Heart right ventricle (tissue), 16 donors: ENCODE measurements at regions of chr12 and their contacts with region 1.

Region 1: DNA sequence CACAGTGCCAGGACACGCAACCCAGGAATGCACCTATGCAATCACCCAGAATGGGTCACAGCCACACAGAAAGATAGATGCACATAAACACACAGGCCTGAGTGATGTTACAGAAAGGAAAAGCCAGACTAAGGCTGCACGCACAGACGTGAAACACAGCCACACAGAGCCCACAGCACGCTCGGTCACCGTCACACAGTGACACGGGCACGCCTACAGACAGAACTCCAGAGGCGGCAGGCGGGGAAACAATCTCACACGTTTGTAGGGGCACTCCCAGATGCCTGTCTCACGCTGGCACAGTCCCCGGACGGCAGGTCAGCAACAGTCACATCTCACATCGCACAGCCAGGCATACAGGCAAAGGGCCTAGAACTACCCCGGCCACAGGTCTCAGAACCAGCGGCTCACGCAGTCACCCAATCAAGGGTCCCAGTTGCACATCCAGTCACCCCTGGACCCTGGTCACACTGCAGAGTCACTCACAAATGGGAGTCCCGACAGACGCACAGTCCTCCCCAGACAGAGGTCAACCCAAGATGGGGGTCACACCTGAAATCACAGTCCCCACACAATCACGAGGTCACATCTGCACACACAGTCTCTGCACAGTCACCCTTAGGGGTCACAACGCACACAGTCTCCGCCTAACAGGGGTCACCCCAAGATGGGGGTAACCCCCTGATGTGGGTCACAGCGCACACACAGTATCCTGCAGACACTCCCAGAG is 790 bp downstream of the SSH1 start:
- DNase-seq: peak; percentile 79 to 84
- ATAC-seq: peak; percentile 8 to 70 (median 52)
- H3K4me3 ChIP-seq: peak overlapping the region; percentile 51 to 92 (median 83)
- H3K27ac ChIP-seq: peak overlapping the region; percentile 76 to 98 (median 97)
- H3K4me1 ChIP-seq: peaks cover 38 to 81% (median 66%) of the 10 kb centered on the region in 9 donors
- H3K27me3 ChIP-seq: no peaks in the 10 kb centered on the region
- CTCF ChIP-seq: no peak

Region 2: DNA sequence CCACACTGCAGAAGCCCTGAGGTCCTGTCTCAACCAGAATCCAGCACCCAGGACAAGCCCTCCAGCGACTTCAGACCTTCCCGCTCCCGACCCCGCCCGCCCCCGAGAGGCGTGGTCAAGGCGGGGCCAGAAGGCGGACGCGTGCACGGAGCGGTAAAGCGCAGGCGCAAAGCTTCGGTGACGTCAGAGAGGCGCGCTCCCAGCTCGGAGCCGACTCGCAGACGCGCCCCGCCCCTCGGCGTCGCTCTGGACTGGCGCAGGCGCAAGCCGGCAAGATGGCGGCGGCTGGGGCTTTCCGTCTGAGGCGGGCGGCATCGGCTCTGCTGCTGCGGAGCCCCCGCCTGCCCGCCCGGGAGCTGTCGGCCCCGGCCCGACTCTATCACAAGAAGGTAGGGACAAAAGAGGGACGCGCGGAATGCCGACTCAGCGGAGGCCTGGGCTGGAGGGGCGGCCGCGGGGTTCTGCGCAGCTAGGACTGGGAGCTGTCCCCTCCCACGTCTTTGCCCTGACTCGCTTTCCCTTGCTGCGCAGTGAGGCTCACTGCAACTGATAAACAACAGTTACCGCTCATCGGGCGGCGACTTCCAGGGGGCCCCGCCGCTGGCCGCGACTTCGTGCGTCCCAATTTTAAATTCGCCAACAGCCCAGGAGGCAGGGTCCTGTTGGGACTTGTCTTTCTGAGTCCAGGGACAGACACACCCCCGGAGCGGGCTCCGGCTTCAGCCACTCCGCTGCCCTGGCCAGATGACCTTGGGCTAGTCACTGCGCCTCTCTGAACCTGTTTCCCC is 294.1 kb before region 1 on chr12 and contains the start of gene ISCU:
- intact Hi-C with region 1: loop called in 5 of 10 experiments (anchors 2 to 10 kb)
- DNase-seq: peak; percentile 98 to 99
- ATAC-seq: peak; percentile 88 to 95 (median 92)
- H3K4me3 ChIP-seq: peak within 1 kb of the TSS; percentile 57 to 99 (median 90)
- H3K27ac ChIP-seq: peak within 1 kb of the TSS; percentile 78 to 97 (median 94)
- H3K4me1 ChIP-seq: peaks cover 5 to 80% (median 67%) of the 10 kb centered on the region in 9 donors
- H3K27me3 ChIP-seq: no peaks in the 10 kb centered on the region
- CTCF ChIP-seq: no peak
- total RNA-seq, gene ISCU: 321 to 630 (median 522) TPM

Region 3: GRCh38 chr12:108664338-108665258 is 192.0 kb before region 1 on chr12:
- intact Hi-C with region 1: loop called in 6 of 10 experiments (anchors 2 to 5 kb)
- DNase-seq: peak; percentile 53 to 89
- ATAC-seq: peak; percentile 88 to 96 (median 92)
- H3K4me3 ChIP-seq: peak overlapping the region in 1 of 10 donors; percentile 14
- H3K27ac ChIP-seq: peak overlapping the region; percentile 36 to 86 (median 78)
- H3K4me1 ChIP-seq: peaks cover 7 to 71% (median 56%) of the 10 kb centered on the region in 9 donors
- H3K27me3 ChIP-seq: no peaks in the 10 kb centered on the region
- CTCF ChIP-seq: peak; percentile 79 to 99 (median 95)

Region 4: GRCh38 chr12:108826101-108826806 is 30.3 kb before region 1 on chr12:
- intact Hi-C with region 1: loop called in 1 of 10 experiments (anchors 2 kb)
- DNase-seq: peak; percentile 45 to 81
- ATAC-seq: peak; percentile 64 to 80 (median 68)
- H3K4me3 ChIP-seq: peak overlapping the region in 8 of 10 donors; percentile 1 to 39 (median 24)
- H3K27ac ChIP-seq: peak overlapping the region; percentile 85 to 96 (median 90)
- H3K4me1 ChIP-seq: peaks cover 38 to 97% (median 90%) of the 10 kb centered on the region in 9 donors
- H3K27me3 ChIP-seq: no peaks in the 10 kb centered on the region
- CTCF ChIP-seq: peak in 3 of 9 donors; percentile 20 to 31 (median 20)

Region 5: DNA sequence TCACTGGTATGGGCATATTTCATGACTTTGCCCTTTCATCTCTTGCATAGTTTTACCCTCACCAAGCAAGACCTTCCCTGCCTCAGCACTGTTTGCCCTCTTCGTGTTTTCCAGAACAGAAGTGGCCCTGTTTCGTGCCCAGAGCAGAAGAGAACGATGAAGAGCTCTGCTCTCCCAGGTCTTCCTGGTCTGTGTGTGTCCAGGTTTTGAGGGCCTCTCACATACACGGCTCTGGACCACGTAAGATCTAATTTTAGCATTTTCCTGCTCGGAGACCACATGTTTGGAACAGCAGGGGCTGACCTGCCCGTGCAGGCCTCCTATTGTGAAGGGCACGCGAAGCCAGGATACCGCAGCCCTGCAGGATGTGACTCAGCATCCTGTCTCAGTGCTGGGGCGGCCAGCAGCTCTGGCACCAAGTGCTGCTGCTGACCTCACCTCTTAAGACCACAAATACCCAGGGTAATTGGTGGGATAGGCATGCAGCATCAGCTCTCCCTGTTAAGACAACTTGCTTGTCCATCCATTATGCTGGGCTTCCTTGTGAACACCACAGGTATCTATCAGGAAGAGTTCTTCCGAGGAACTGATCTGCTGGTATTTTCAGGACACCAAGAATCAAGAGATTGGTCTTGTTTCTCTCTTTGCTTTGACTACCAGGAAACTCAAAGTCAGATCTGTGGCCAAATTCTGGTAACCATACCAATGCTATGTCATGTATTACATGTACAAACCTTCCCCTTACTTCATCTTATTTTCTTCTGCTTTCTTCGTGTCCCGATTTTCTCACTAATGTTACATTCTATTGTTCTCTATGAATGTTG is 18.2 kb before region 1 on chr12:
- intact Hi-C with region 1: loop called in 1 of 10 experiments (anchors 2 kb)
- DNase-seq: peak; percentile 87 to 93
- ATAC-seq: peak; percentile 87 to 94 (median 94)
- H3K4me3 ChIP-seq: peak overlapping the region in 1 of 10 donors; percentile 10
- H3K27ac ChIP-seq: peak overlapping the region; percentile 83 to 96 (median 92)
- H3K4me1 ChIP-seq: peaks cover 55 to 100% (median 94%) of the 10 kb centered on the region in 9 donors
- H3K27me3 ChIP-seq: no peaks in the 10 kb centered on the region
- CTCF ChIP-seq: no peak